Activated B cell treated with CpG ODN at 0.5 μM for 24 hours (primary cell): ENCODE measurements at regions of chr10 and their contacts with region 1.

Region 1: GRCh38 chr10:61903221-61903927 is 1.9 kb downstream of the ARID5B start:
- DNase-seq: peak; percentile 76
- ATAC-seq: peak; percentile 46
- H3K4me3 Mint-ChIP-seq: peak overlapping the region; percentile 97
- H3K27ac Mint-ChIP-seq: peak overlapping the region; percentile 98
- H3K4me1 Mint-ChIP-seq: peaks cover 51% of the 10 kb centered on the region
- H3K27me3 Mint-ChIP-seq: no peaks in the 10 kb centered on the region
- CTCF ChIP-seq: no peak

Region 2: GRCh38 chr10:61750929-61751471 is 152.4 kb before region 1 on chr10:
- CTCF ChIA-PET with region 1: interaction called, 10 read pairs
- POLR2A ChIA-PET with region 1: interaction called, 72 read pairs
- intact Hi-C with region 1: loop called (anchors 1 kb)
- DNase-seq: peak; percentile 47
- ATAC-seq: peak; percentile 97
- H3K4me3 Mint-ChIP-seq: peak overlapping the region; percentile 44
- H3K27ac Mint-ChIP-seq: no peak overlapping the region
- H3K4me1 Mint-ChIP-seq: peaks cover 38% of the 10 kb centered on the region
- H3K27me3 Mint-ChIP-seq: no peaks in the 10 kb centered on the region
- CTCF ChIP-seq: no peak

Region 3: DNA sequence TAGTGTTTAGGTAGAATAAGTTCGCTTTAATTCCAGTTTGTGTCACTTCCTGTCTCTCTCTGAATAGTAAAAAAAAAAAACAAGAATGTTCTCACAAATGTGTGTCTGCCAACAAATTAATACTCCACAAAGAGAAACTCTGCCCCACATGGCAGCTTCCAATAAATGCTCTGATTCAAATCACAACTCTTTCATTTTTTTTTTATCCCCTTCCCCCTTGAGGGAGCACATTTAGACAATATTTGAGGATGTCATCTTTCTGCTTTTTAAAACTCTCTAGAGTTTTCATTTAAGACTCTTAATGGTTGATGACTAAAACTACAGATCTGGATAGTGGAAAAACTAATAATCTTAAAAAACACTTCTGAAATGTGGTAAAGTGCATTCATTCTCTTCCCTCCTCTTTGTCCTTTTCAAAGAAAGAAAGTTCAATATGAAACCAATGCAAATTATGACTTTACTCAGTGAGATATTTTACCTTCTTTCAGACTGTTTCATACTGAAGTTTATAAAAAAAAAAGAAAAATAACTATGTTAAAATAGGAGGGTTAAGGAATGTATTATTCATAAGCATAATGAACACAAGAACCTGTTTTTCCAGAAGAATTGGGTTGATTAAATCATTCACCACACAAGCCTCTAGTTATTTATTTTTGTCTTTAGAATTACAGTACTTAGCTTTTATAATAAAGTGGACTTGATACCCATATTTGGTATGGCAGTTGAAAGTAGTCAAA is 40.5 kb after region 1 on chr10:
- CTCF ChIA-PET with region 1: interaction called, 8 read pairs
- POLR2A ChIA-PET with region 1: interaction called, 256 read pairs
- intact Hi-C with region 1: loop called (anchors 1 kb)
- DNase-seq: no peak
- ATAC-seq: peak; percentile 65
- H3K4me3 Mint-ChIP-seq: peak overlapping the region; percentile 44
- H3K27ac Mint-ChIP-seq: peak overlapping the region; percentile 91
- H3K4me1 Mint-ChIP-seq: peaks cover 66% of the 10 kb centered on the region
- H3K27me3 Mint-ChIP-seq: no peaks in the 10 kb centered on the region
- CTCF ChIP-seq: no peak

Region 4: GRCh38 chr10:61992671-61993668 is 89.6 kb after region 1 on chr10:
- CTCF ChIA-PET with region 1: interaction called, 18 read pairs
- POLR2A ChIA-PET with region 1: interaction called, 320 read pairs
- intact Hi-C with region 1: loop called (anchors 1 kb)
- DNase-seq: no peak
- ATAC-seq: peak; percentile 59
- H3K4me3 Mint-ChIP-seq: peak overlapping the region; percentile 62
- H3K27ac Mint-ChIP-seq: peak overlapping the region; percentile 89
- H3K4me1 Mint-ChIP-seq: peaks cover 90% of the 10 kb centered on the region
- H3K27me3 Mint-ChIP-seq: no peaks in the 10 kb centered on the region
- CTCF ChIP-seq: no peak

Region 5: DNA sequence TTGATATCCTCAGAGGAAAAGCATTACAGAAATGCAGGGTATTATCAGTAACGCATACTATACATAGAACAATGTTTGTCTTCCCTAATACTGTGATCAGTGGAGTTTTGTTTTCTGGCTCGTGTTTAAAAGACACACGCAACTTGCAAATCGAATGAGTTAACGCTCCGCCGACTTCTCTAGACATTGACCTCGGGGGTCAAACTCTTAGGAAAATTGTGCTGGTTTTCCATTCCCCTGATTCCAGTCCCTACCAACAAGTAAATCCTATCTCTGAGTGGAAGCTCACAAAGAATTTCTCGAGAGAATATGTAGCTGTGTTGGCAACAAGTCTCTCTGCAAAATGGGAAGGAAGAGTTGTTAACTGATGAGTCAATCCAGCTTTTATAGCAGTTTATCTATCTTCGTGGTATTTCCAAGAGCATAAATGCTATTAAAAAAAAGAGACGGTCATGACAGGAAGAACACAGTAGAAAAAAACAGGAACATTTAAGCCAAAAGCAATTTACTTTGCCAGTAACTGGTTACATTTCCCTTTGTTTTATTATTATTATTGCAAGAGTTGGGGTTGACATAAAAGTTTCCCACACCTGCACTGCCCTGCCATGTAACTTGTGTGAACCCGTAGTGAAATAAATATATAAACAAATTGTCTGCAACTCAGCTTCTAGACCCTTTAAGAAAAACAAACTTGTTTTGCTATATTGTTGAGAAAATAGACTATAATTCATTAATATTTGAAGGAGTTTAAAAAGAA is 142.6 kb after region 1 on chr10:
- CTCF ChIA-PET with region 1: interaction called, 101 read pairs
- POLR2A ChIA-PET with region 1: interaction called, 589 read pairs
- intact Hi-C with region 1: loop called (anchors 1 kb)
- DNase-seq: no peak
- ATAC-seq: peak; percentile 4
- H3K4me3 Mint-ChIP-seq: peak overlapping the region; percentile 85
- H3K27ac Mint-ChIP-seq: peak overlapping the region; percentile 93
- H3K4me1 Mint-ChIP-seq: peaks cover 100% of the 10 kb centered on the region
- H3K27me3 Mint-ChIP-seq: no peaks in the 10 kb centered on the region
- CTCF ChIP-seq: no peak

Region 6: GRCh38 chr10:62244780-62245467 is 341.6 kb after region 1 on chr10:
- CTCF ChIA-PET with region 1: interaction called, 35 read pairs
- POLR2A ChIA-PET with region 1: interaction called, 87 read pairs
- intact Hi-C with region 1: loop called (anchors 1 kb)
- DNase-seq: no peak
- ATAC-seq: peak; percentile 64
- H3K4me3 Mint-ChIP-seq: peak overlapping the region; percentile 57
- H3K27ac Mint-ChIP-seq: peak overlapping the region; percentile 72
- H3K4me1 Mint-ChIP-seq: peaks cover 45% of the 10 kb centered on the region
- H3K27me3 Mint-ChIP-seq: no peaks in the 10 kb centered on the region
- CTCF ChIP-seq: peak; percentile 74